Gastrocnemius medialis (tissue), 4 donors: ENCODE measurements at regions of chr13 and their contacts with region 1.

Region 1: GRCh38 chr13:111153279-111153976 is 38.3 kb downstream of the ARHGEF7 start:
- DNase-seq: peak; percentile 84 to 92
- ATAC-seq: peak; percentile 94 to 95
- H3K4me3 ChIP-seq: peak overlapping the region; percentile 72 to 96 (median 90)
- H3K27ac ChIP-seq: peak overlapping the region; percentile 93 to 98 (median 96)
- H3K4me1 ChIP-seq: peaks cover 35 to 48% of the 10 kb centered on the region in 2 donors
- H3K27me3 ChIP-seq: no peaks in the 10 kb centered on the region
- CTCF ChIP-seq: peak in 2 of 5 experiments; percentile 26 to 49
- POLR2A ChIP-seq: peak; percentile 96 to 97

Region 2: DNA sequence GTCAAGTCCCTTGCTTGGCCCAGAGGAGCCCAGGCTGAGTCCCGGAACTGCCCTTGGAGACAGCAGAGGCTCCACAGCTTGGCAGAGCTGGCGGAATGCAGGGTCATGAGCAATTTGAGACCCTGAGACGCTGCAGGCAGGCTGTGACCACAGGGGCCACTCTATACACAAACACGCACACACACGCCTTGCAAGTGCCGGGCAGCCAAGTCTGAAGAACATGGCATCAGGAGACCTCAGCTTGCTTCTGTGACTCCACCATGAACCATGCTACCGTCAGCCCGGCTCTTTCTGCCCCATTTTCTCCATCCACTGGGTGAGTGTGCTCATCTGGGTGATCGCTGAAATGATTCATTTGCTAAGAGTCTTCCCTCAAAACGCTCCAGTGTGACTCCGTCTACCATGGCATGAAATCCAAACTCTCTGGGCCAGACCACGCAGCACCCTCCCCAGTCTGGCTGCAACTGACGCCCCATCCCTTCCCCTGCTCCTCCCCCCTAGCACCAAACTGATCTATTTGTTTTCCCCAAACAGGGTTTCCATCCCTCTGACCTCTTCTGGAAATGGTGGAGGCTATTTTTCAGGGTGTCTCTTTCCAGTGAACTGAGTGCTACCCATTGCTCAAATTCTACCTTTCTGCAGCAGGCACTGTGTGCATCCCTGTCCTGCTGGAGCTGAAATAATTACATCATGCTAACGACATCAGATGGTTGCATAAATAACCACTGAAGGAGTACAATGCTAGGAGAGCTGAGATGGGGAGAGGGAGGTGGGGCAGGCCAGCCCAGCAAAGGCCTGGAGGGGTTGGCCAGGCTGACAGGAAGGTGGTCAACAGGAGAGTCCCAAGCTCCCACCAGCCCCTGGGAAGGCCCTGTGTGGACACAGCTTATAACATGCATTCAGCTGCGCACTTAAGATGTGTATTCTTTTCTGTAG is 450.6 kb before region 1 on chr13:
- in situ Hi-C with region 1: no loop called
- intact Hi-C with region 1: no loop called
- DNase-seq: peak in 1 of 2 donors; percentile 75
- ATAC-seq: peak in 1 of 2 donors; percentile 43
- H3K4me3 ChIP-seq: peak overlapping the region in 2 of 4 donors; percentile 7 to 9
- H3K27ac ChIP-seq: peak overlapping the region; percentile 79 to 89 (median 84)
- H3K4me1 ChIP-seq: peaks cover 54 to 55% of the 10 kb centered on the region in 2 donors
- H3K27me3 ChIP-seq: no peaks in the 10 kb centered on the region
- CTCF ChIP-seq: no peak
- POLR2A ChIP-seq: peak in 1 of 2 donors; percentile 5

Region 3: GRCh38 chr13:110771194-110771593 is 382.2 kb before region 1 on chr13:
- in situ Hi-C with region 1: no loop called
- intact Hi-C with region 1: no loop called
- DNase-seq: no peak
- ATAC-seq: no peak
- H3K4me3 ChIP-seq: no peak overlapping the region
- H3K27ac ChIP-seq: no peak overlapping the region
- H3K4me1 ChIP-seq: no peaks in the 10 kb centered on the region
- H3K27me3 ChIP-seq: no peaks in the 10 kb centered on the region
- CTCF ChIP-seq: no peak
- POLR2A ChIP-seq: no peak

Region 4: GRCh38 chr13:110971486-110971885 is 181.9 kb before region 1 on chr13:
- in situ Hi-C with region 1: no loop called
- intact Hi-C with region 1: no loop called
- DNase-seq: no peak
- ATAC-seq: no peak
- H3K4me3 ChIP-seq: no peak overlapping the region
- H3K27ac ChIP-seq: no peak overlapping the region
- H3K4me1 ChIP-seq: no peaks in the 10 kb centered on the region
- H3K27me3 ChIP-seq: no peaks in the 10 kb centered on the region
- CTCF ChIP-seq: no peak
- POLR2A ChIP-seq: no peak

Region 5: DNA sequence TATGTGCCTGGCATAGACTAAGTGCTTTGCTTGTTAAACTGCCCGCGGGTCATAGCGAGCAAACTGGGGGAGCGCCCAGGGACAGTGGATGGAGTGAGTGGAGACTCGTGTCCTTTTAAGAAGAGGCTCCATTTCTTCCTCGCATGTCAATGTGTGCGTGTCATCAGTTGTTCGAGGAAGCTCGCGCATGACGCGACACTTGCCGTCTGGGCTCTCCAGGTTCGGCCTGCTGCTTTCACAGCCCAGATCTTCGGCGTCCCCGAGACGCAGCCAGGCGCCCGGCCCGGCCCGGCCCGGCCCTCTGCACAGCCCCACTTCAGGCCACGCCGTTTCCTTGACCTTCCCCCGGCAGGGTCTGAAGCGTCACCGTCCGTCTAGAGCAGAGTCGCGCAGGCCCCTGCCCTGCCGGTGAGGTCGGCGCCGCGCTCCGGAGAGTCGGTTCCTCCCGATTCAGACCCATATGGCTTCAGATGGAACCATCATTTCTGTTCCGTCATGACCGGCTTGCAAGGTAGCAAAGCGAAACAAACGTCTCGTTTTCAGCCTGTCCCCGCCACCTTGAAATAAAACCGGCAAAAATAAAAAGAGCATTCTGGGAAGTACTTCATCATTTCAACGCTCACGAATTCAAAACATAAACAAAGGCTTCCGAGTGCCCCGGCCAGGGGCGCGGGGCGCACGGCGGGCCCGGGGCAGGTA is 38.9 kb before region 1 on chr13:
- in situ Hi-C with region 1: no loop called
- intact Hi-C with region 1: loop called (anchors 5 kb)
- DNase-seq: peak; percentile 36 to 56
- ATAC-seq: peak; percentile 55 to 60
- H3K4me3 ChIP-seq: peak overlapping the region; percentile 63 to 70 (median 70)
- H3K27ac ChIP-seq: peak overlapping the region; percentile 72 to 82 (median 79)
- H3K4me1 ChIP-seq: peaks cover 5 to 12% of the 10 kb centered on the region in 2 donors
- H3K27me3 ChIP-seq: peaks cover 0 to 4% (median 0%) of the 10 kb centered on the region in 3 donors
- CTCF ChIP-seq: no peak
- POLR2A ChIP-seq: peak; percentile 54 to 62

Region 6: DNA sequence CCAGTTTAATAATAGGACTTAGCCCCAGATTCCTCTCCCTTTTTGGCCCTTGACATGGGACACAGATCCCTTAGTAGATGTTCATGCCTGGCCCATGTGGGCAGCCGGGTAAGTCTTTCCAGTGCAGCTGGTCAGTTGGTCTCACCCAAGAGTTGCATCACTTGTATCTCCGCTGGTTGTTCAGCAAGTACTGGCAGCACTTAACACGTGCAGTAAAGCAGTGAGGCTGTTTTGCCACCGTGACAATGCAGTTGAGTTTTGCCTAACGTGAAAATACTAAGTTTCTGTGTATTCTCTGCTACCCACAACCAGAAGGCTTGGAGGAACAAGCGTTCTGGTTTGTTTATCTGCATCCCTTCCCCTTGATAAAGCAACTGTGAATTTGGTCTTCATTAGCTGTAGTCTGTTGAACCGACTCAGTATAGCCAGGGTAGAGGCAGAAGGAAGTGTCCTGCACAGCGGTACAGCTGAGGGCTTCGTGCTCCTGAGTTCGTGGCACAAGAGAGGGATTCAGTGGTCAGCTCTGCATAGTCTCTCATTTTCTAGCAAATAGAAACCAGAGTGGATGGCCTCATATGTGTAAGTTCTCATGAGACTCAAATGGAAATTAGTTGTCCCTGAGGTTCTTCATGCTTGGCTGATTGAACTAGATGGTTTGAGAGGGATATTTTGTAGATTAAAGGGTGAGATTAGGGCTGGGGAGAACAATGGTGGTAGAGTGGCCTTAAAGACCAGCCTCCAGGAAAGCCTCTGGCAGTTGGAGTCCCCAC is 12.0 kb after region 1 on chr13:
- in situ Hi-C with region 1: no loop called
- intact Hi-C with region 1: loop called (anchors 1 kb)
- DNase-seq: peak; percentile 92 to 96
- ATAC-seq: peak; percentile 95 to 99
- H3K4me3 ChIP-seq: peak overlapping the region in 1 of 4 donors; percentile 12
- H3K27ac ChIP-seq: peak overlapping the region; percentile 85 to 93 (median 90)
- H3K4me1 ChIP-seq: peaks cover 73 to 79% of the 10 kb centered on the region in 2 donors
- H3K27me3 ChIP-seq: no peaks in the 10 kb centered on the region
- CTCF ChIP-seq: no peak
- POLR2A ChIP-seq: peak; percentile 38 to 42

Region 7: DNA sequence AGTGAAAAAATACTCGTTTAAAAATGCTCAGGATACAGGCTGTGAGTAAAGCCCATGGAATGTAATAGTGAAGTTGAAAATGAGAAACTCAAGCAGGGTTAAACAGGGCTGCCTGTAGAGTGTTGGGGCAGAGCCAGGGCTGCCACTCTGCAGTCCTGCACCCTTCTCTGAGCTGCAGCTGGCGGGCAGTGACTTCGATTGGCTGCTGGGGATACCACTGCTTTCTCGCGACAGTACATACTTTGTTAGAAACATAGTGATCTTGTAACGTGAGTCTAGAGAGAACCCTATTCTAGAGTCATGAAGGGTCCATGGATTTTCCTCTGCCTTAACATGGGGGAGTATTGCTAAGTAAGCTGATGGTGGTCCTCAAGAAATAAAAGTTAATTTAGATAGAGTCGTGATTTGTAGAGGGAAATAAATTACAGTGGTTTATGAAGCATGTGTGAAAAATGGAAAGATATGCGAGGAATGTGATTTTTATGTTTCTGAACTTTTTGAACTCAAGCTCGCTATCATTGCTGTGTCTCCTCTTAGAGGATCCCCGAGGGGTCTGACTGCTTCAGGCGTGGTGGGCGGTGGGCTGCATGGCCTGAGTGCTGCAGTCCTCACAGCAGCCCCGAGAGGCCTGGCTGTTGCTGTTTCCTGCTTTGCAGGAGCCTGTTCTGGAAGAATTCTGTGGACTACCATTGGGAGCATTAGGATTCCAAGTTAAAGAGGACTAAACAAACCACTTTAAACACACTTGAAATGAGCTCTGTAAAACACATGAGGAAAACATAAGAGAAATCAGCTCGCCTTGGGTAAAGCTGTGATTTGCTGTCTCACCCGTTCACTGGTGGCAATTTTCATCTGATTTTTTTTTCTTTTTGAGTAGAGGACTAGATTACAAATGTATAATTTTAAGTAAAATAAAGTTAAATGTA is 57.4 kb after region 1 on chr13:
- in situ Hi-C with region 1: loop called in 1 of 4 experiments (anchors 5 kb)
- intact Hi-C with region 1: no loop called
- DNase-seq: peak in 1 of 2 donors; percentile 42
- ATAC-seq: peak in 1 of 2 donors; percentile 47
- H3K4me3 ChIP-seq: peak overlapping the region in 3 of 4 donors; percentile 1 to 8 (median 6)
- H3K27ac ChIP-seq: peak overlapping the region; percentile 37 to 83 (median 74)
- H3K4me1 ChIP-seq: peaks cover 77 to 89% of the 10 kb centered on the region in 2 donors
- H3K27me3 ChIP-seq: no peaks in the 10 kb centered on the region
- CTCF ChIP-seq: no peak
- POLR2A ChIP-seq: no peak

Region 8: DNA sequence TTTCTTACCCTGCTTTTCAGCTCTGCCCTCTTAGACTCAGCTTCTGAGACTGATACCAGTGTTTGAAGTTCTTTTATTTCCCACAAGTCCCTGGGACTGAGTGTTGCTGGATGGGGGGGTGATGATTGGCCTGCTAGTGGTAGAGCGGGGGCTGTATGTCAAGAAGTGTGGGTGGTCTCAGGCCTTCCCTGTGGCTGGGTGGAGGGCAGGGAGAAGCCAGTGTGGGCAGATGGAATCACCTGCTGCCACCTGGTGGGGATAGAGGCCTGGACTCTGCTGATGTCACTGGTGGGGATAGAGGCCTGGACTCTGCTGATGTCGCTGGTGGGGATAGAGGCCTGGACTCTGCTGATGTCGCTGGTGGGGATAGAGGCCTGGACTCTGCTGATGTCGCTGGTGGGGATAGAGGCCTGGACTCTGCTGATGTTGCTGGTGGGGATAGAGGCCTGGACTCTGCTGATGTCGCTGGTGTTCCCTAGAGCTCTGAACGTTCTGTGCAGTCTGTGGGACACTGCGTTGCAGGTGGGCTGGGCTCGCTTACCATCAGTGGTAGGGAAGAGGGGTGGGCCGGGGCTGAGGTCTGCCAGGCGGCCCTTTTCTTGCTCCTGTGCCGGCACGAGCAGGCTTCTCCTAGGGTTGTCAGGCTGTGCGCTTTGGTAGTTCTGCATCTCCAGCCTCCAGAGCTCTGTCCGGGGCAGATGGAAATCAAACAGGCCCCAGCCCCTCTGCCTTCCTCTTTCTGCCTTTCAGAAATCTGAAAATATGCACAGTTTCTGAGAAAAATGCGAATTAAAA is 62.9 kb after region 1 on chr13:
- in situ Hi-C with region 1: loop called in 1 of 4 experiments (anchors 5 kb)
- intact Hi-C with region 1: loop called (anchors 1 kb)
- DNase-seq: peak; percentile 26 to 73
- ATAC-seq: peak; percentile 53 to 68
- H3K4me3 ChIP-seq: no peak overlapping the region
- H3K27ac ChIP-seq: peak overlapping the region; percentile 81 to 83 (median 82)
- H3K4me1 ChIP-seq: peaks cover 79 to 82% of the 10 kb centered on the region in 2 donors
- H3K27me3 ChIP-seq: no peaks in the 10 kb centered on the region
- CTCF ChIP-seq: peak; percentile 26 to 71 (median 56)
- POLR2A ChIP-seq: no peak